Activated CD4-positive, alpha-beta memory T cell treated with anti-CD3 and anti-CD28 coated beads, Interleukin-2, amount 10 ng/mL, durations not matched to agents 7 days and 5 days (primary cell): ENCODE measurements at regions of chr3 and their contacts with region 1.

Region 1: GRCh38 chr3:157088601-157089454 is 71.1 kb downstream of the CCNL1 start:
- DNase-seq: peak; percentile 95
- H3K4me3 Mint-ChIP-seq: peak overlapping the region; percentile 76
- H3K27ac Mint-ChIP-seq: peak overlapping the region; percentile 95
- H3K4me1 Mint-ChIP-seq: peaks cover 71% of the 10 kb centered on the region
- H3K27me3 Mint-ChIP-seq: no peaks in the 10 kb centered on the region

Region 2: DNA sequence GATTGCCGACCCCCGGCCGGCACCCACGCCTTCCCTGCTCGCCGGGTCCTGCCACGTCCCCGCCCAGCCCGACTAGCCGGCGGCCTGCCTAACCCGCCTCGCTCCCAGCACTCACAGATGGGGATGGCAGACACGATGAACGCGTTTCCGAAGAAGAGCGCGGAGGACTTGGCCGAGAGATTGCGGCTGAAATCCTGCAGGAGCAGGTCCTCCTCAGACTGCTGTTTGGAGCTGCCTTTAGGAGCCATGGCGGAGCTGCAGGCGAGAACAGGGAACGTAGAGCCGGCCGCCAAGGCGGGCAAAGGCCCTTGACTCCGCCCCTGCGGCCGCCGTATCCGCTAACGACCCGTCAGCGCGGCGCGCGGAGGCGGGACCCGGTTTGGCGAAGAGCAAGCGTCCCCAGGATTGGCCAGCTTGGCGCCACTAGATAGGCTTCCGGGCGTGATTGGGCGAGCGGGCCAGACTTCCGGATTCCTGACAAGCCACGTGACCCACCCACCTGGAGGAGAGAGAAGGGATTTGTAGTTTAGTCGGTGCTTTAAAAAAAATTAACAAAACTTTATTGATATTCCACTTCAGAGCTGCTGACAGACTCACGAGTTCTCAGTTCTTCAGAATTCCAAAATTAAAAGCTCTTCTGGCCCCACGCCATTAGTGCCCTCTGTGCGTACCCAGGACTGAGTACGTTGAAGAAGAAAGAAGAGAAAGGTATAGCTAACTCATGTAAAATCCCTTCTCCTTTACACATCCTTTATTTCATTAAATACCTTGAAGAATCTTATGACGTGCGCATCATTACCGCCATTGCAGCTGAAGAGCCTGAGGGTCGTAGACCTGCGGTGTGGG is 533.8 kb before region 1 on chr3 and contains the start of gene SSR3:
- CTCF ChIA-PET with region 1: interaction called, 10 read pairs
- POLR2A ChIA-PET with region 1: interaction called, 26 read pairs
- DNase-seq: peak; percentile 99
- H3K4me3 Mint-ChIP-seq: peak within 1 kb of the TSS; percentile 96
- H3K27ac Mint-ChIP-seq: peak within 1 kb of the TSS; percentile 84
- H3K4me1 Mint-ChIP-seq: peaks cover 48% of the 10 kb centered on the region
- H3K27me3 Mint-ChIP-seq: no peaks in the 10 kb centered on the region
- total RNA-seq, gene SSR3: 167 to 174 TPM

Region 3: GRCh38 chr3:156816800-156817645 is 271.8 kb before region 1 on chr3:
- CTCF ChIA-PET with region 1: interaction called, 6 read pairs
- POLR2A ChIA-PET with region 1: interaction called, 20 read pairs
- DNase-seq: peak; percentile 93
- H3K4me3 Mint-ChIP-seq: peak overlapping the region; percentile 86
- H3K27ac Mint-ChIP-seq: peak overlapping the region; percentile 96
- H3K4me1 Mint-ChIP-seq: peaks cover 71% of the 10 kb centered on the region
- H3K27me3 Mint-ChIP-seq: no peaks in the 10 kb centered on the region

Region 4: DNA sequence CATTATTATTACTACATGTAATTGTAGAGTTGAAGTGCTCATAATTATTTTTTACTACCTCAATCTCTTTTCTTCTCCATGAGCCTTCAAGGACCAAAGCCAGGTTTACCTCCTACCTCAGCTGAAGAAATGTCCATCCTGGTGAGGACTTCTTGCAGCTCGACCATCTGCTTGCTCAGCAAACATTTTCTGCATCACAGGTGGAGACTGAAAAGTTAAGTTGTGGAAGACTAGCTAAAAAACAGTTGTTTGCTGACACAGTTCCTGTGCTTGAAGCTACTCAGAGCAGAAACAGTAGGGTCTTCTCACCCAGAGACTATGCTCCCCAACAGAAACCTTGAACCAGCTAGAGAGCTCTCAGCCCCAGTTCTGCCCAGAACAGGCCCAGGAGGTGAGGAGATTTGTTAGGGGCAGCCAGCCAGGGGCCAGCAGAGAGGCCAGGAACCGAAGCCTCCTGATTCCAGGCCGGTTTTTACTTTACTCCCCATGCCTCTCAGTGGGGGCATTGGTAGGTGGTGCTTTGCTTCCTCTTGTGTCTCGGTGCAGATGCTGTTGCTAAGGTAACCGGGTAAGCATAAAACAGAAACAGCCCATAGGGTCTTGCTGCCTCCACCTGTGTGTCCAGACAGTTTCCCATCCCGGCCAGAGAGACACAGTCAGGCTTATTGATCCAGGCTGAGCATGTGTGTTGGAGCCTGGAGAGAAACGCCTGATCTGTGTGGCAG is 16.3 kb after region 1 on chr3:
- CTCF ChIA-PET with region 1: interaction called, 11 read pairs
- POLR2A ChIA-PET with region 1: interaction called, 58 read pairs
- DNase-seq: no peak
- H3K4me3 Mint-ChIP-seq: no peak overlapping the region
- H3K27ac Mint-ChIP-seq: peak overlapping the region; percentile 83
- H3K4me1 Mint-ChIP-seq: peaks cover 50% of the 10 kb centered on the region
- H3K27me3 Mint-ChIP-seq: no peaks in the 10 kb centered on the region

Region 5: DNA sequence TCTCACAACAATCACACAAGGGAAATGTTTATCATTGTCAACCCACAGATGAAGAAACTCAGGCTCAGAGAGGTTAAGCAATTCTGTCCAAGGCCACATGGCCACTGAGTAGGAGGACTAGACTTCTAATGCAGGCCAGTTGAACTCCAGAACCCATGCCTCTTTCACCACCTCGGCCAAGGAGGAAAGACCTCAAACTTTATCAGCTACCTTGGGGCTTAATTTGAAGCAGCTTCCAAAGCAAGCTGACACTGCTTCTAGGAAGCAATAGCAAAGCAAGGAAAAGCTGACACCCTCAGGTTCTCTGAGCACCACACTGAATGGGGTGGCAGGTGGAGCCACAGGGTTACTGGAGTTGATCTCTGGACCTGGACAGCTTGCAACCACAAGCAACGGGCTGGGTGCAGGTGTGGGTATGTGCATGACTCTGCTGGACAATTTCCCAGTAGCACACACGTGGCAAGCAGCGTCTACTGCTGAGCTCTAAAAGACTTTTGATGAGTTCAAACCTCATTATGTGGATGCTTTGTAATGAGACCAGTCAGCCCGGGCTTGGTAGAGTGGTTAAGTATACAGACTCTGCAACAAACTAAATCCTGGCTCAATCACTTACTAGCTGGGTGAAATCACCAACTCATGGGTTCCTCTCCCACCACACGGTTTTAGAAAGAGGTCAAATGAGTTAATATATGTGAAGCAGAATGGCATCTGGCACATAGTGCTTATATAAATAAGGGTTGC is 48.0 kb after region 1 on chr3:
- CTCF ChIA-PET with region 1: interaction called, 92 read pairs
- POLR2A ChIA-PET with region 1: interaction called, 381 read pairs
- DNase-seq: no peak
- H3K4me3 Mint-ChIP-seq: no peak overlapping the region
- H3K27ac Mint-ChIP-seq: peak overlapping the region; percentile 89
- H3K4me1 Mint-ChIP-seq: peaks cover 61% of the 10 kb centered on the region
- H3K27me3 Mint-ChIP-seq: no peaks in the 10 kb centered on the region